Activated T-helper 1 cell treated with anti-CD3 and anti-CD28 coated beads, Interleukin-12 subunit alpha, Interleukin-12 subunit beta, Interleukin-2, Interleukin-4 antibody, amounts not matched to agents 30 ng/mL and 10 ng/mL and 1 ng/mL, durations not matched to agents 14 hours and 24 hours and 36 hours (primary cell): ENCODE measurements at regions of chr3 and their contacts with region 1.

Region 1: GRCh38 chr3:16264708-16265454 is at the starts of genes DPH3 and OXNAD1:
- DNase-seq: peak; percentile 99
- H3K4me3 Mint-ChIP-seq: peak within 1 kb of the TSS; percentile 97
- H3K27ac Mint-ChIP-seq: peak within 1 kb of the TSS; percentile 100
- H3K4me1 Mint-ChIP-seq: peaks cover 35% of the 10 kb centered on the region
- H3K27me3 Mint-ChIP-seq: no peaks in the 10 kb centered on the region
- total RNA-seq, gene DPH3: 28.1 and 36.6 TPM in 2 replicates
- total RNA-seq, gene OXNAD1: 29.5 and 31.1 TPM in 2 replicates

Region 2: GRCh38 chr3:15815696-15816095 is 449.2 kb before region 1 on chr3:
- intact Hi-C with region 1: loop called (anchors 1 kb)
- DNase-seq: no peak
- H3K4me3 Mint-ChIP-seq: no peak overlapping the region
- H3K27ac Mint-ChIP-seq: no peak overlapping the region
- H3K4me1 Mint-ChIP-seq: peaks cover 57% of the 10 kb centered on the region
- H3K27me3 Mint-ChIP-seq: no peaks in the 10 kb centered on the region

Region 3: DNA sequence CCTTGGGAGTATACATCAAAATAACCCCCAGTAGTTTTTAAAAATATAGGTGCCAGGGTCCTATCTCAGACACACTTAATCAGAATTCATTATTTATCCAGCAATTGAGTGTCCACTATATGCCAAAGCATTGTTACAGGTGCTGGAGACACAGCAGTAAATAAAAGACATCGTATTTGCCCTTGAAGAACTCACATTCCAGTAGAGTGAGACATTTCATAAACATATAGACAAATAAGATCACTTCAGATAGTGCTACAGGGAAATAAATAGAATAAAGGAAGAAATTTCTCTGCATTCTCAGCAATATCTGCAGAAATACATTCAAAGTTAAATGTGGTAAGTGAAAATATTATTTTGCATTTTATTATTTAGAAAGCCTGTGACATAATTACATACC is 433.0 kb before region 1 on chr3:
- intact Hi-C with region 1: no loop called
- DNase-seq: no peak
- H3K4me3 Mint-ChIP-seq: no peak overlapping the region
- H3K27ac Mint-ChIP-seq: no peak overlapping the region
- H3K4me1 Mint-ChIP-seq: no peaks in the 10 kb centered on the region
- H3K27me3 Mint-ChIP-seq: peaks cover 2% of the 10 kb centered on the region

Region 4: GRCh38 chr3:16190704-16191103 is 74.2 kb before region 1 on chr3:
- intact Hi-C with region 1: no loop called
- DNase-seq: no peak
- H3K4me3 Mint-ChIP-seq: no peak overlapping the region
- H3K27ac Mint-ChIP-seq: no peak overlapping the region
- H3K4me1 Mint-ChIP-seq: no peaks in the 10 kb centered on the region
- H3K27me3 Mint-ChIP-seq: peaks cover 6% of the 10 kb centered on the region

Region 5: GRCh38 chr3:16309558-16309957 is 44.7 kb after region 1 on chr3:
- intact Hi-C with region 1: loop called (anchors 2 kb)
- DNase-seq: peak; percentile 50
- H3K4me3 Mint-ChIP-seq: peak overlapping the region; percentile 72
- H3K27ac Mint-ChIP-seq: peak overlapping the region; percentile 92
- H3K4me1 Mint-ChIP-seq: peaks cover 84% of the 10 kb centered on the region
- H3K27me3 Mint-ChIP-seq: no peaks in the 10 kb centered on the region

Region 6: DNA sequence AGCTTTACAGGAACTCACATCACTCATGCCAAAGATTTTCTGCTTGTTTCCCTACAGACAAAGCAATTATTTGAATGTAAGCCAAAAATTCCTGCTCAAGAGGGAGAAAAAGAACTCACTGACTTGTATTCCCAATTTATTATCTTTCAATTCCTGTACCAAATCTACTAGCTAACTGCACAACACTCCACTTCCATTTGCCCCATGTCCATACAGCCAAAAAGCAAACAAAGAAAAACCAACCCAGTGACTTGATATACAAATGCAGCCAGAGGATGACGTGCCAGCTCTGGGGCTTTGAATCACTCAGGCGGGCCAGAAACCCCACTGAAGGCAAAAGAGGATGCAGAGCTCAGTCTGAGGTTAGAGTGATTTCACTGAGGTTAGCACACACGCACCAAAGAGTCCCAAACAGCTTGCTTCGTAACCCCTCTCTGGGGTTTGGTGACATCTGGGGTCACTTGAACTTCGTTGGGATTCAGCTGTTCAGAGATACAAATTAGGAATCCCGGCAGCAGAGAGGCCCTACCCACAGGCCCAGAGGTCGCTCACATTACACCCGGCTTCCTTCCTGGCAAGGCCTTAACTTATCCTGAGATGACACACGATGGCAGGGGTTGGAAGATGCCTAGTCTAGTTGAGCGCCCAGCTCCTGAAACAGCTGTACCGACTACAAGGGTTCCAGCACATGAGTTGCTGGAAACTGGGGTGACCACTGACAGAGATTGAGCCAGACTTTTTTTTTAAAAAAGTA is 247.0 kb after region 1 on chr3:
- intact Hi-C with region 1: loop called (anchors 1 kb)
- DNase-seq: peak; percentile 79
- H3K4me3 Mint-ChIP-seq: peak overlapping the region; percentile 97
- H3K27ac Mint-ChIP-seq: peak overlapping the region; percentile 89
- H3K4me1 Mint-ChIP-seq: peaks cover 83% of the 10 kb centered on the region
- H3K27me3 Mint-ChIP-seq: no peaks in the 10 kb centered on the region

Region 7: GRCh38 chr3:16884084-16884747 is 619.3 kb after region 1 on chr3:
- intact Hi-C with region 1: loop called (anchors 10 kb)
- DNase-seq: peak; percentile 45
- H3K4me3 Mint-ChIP-seq: peak overlapping the region; percentile 94
- H3K27ac Mint-ChIP-seq: peak overlapping the region; percentile 96
- H3K4me1 Mint-ChIP-seq: peaks cover 38% of the 10 kb centered on the region
- H3K27me3 Mint-ChIP-seq: peaks cover 4% of the 10 kb centered on the region

Region 8: GRCh38 chr3:17412950-17413530 is 1148.2 kb after region 1 on chr3:
- intact Hi-C with region 1: loop called (anchors 10 kb)
- DNase-seq: peak; percentile 16
- H3K4me3 Mint-ChIP-seq: no peak overlapping the region
- H3K27ac Mint-ChIP-seq: no peak overlapping the region
- H3K4me1 Mint-ChIP-seq: no peaks in the 10 kb centered on the region
- H3K27me3 Mint-ChIP-seq: no peaks in the 10 kb centered on the region